ENCODE measurements at regions of chr6 and their contacts with region 1.

Region 1: DNA sequence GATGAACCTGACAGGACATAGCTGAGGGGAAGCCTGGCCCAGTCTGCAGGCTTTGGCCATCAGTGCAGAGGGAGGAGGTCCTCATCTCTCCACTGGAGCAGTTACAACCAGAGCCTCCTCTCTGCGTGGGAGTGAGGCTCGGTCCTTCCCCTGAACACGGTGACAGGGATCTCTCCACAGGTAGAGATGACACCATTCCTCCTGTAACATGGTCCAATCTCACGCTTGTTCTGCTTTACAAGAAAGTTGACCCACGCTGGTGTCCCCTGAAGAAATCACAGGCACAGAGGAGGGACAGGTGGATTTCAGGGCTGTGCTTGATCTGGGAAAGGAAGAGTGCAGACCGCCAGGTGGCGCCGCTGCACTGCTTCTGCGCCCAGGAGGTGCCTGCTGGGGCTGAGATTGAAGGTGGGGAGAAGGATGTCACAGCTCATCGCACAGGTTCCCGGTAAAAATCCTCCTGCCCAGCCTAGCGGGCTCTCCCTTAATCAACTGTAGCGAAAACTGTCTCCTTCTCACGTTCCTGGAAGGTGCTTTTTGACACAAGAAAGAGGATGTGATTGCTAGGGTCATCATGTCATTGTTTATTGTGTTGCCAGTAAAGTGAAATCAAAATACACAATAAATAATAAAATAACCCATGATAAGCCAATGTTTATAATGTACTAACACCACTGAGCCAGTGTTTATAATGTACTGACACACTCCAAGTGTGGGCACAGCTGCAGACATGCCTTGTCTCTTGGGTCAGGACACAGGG is 20.4 kb downstream of the HLA-G start:
- DNase-seq: peak; percentile 63 to 74 (median 70)
- H3K4me3 ChIP-seq: no peak overlapping the region
- H3K4me3 Mint-ChIP-seq: no peak overlapping the region
- H3K27ac ChIP-seq: no peak overlapping the region
- H3K27ac Mint-ChIP-seq: peak overlapping the region in 1 of 7 donors; percentile 27
- H3K4me1 ChIP-seq: peaks cover 5 to 7% of the 10 kb centered on the region in 2 donors
- H3K4me1 Mint-ChIP-seq: peaks cover 12% of the 10 kb centered on the region
- H3K27me3 ChIP-seq: peaks cover 38 to 72% of the 10 kb centered on the region in 2 donors
- H3K27me3 Mint-ChIP-seq: peaks cover 50 to 87% (median 59%) of the 10 kb centered on the region in 3 donors
- CTCF ChIP-seq: peak; percentile 97

Region 2: DNA sequence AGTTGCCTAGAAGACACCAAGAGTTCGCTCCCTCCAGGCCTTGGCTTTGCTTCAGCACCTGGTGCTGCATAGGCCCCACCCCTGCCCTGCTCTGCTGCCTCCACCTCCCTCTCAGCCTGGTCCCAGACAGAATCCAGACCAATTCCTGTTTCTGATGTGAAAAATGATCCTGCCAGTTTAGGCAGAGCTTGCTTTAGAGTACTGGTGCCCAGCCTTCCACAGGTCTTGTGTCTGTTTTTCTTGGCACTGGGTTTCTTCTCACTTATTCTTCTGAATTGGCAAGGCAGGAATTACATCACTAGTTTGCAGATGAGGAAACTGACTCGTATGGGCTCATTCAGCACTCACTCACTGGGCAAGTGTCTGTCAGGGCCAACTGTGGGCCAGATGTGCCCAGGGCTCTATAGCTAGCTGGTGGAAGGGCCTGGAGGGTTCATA is 147.3 kb after region 1 on chr6:
- intact Hi-C with region 1: no loop called
- DNase-seq: peak in 1 of 3 donors; percentile 26
- H3K4me3 ChIP-seq: no peak overlapping the region
- H3K4me3 Mint-ChIP-seq: no peak overlapping the region
- H3K27ac ChIP-seq: no peak overlapping the region
- H3K27ac Mint-ChIP-seq: no peak overlapping the region
- H3K4me1 ChIP-seq: no peaks in the 10 kb centered on the region
- H3K4me1 Mint-ChIP-seq: peaks cover 2% of the 10 kb centered on the region
- H3K27me3 ChIP-seq: no peaks in the 10 kb centered on the region
- H3K27me3 Mint-ChIP-seq: peaks cover 10 to 17% (median 11%) of the 10 kb centered on the region in 3 donors
- CTCF ChIP-seq: no peak

Region 3: DNA sequence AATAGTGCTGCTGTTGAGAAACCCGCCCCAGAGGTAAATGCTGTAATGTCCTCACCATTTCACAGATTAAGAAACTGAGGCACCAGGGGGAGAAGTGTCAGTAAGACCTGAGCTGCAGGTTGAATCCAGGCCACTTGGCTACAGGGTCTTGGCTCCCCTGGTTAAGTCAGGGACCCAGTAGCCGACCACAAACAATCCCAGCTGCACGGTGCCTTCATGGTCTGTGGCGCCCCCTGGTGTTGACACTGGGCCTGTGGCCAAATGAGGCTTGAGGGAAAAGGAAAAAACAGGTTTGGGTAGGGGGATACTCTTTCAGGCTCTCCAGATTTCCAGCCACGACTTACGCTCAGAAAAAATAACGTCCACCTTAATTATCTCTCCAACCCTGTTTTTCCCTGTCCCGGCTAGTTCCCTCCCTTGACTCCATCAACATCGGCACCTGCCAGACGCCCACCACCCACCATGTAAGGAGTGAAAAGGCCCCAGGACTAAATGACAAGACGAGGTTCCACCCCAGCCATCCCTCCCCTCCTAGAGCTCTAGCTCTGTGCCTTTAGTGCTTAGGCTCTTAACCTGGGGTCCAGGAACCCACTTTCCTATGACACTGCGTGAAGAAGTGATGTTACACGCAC is 165.4 kb after region 1 on chr6:
- intact Hi-C with region 1: loop called (anchors 1 kb)
- DNase-seq: peak in 2 of 3 donors; percentile 25 to 27
- H3K4me3 ChIP-seq: no peak overlapping the region
- H3K4me3 Mint-ChIP-seq: no peak overlapping the region
- H3K27ac ChIP-seq: no peak overlapping the region
- H3K27ac Mint-ChIP-seq: peak overlapping the region in 1 of 7 donors; percentile 56
- H3K4me1 ChIP-seq: no peaks in the 10 kb centered on the region
- H3K4me1 Mint-ChIP-seq: no peaks in the 10 kb centered on the region
- H3K27me3 ChIP-seq: peaks cover 0 to 7% of the 10 kb centered on the region in 2 donors
- H3K27me3 Mint-ChIP-seq: peaks cover 6 to 19% (median 15%) of the 10 kb centered on the region in 3 donors
- CTCF ChIP-seq: peak; percentile 90

Measured in CD14-positive monocyte (primary cell).